Activated CD4-positive, alpha-beta memory T cell treated with anti-CD3 and anti-CD28 coated beads for 36 hours (primary cell): ENCODE measurements at regions of chr14 and their contacts with region 1.

Region 1: GRCh38 chr14:89509891-89510290 is 92.9 kb upstream of the FOXN3 start:
- DNase-seq: no peak
- H3K4me3 Mint-ChIP-seq: peak overlapping the region; percentile 77
- H3K27ac Mint-ChIP-seq: peak overlapping the region; percentile 93
- H3K4me1 Mint-ChIP-seq: peaks cover 72% of the 10 kb centered on the region
- H3K27me3 Mint-ChIP-seq: no peaks in the 10 kb centered on the region

Region 2: GRCh38 chr14:89276424-89276975 is 233.4 kb before region 1 on chr14:
- CTCF ChIA-PET with region 1: no interaction called
- POLR2A ChIA-PET with region 1: no interaction called
- intact Hi-C with region 1: loop called (anchors 10 kb)
- DNase-seq: peak; percentile 92
- H3K4me3 Mint-ChIP-seq: peak overlapping the region; percentile 60
- H3K27ac Mint-ChIP-seq: peak overlapping the region; percentile 94
- H3K4me1 Mint-ChIP-seq: peaks cover 77% of the 10 kb centered on the region
- H3K27me3 Mint-ChIP-seq: no peaks in the 10 kb centered on the region

Region 3: DNA sequence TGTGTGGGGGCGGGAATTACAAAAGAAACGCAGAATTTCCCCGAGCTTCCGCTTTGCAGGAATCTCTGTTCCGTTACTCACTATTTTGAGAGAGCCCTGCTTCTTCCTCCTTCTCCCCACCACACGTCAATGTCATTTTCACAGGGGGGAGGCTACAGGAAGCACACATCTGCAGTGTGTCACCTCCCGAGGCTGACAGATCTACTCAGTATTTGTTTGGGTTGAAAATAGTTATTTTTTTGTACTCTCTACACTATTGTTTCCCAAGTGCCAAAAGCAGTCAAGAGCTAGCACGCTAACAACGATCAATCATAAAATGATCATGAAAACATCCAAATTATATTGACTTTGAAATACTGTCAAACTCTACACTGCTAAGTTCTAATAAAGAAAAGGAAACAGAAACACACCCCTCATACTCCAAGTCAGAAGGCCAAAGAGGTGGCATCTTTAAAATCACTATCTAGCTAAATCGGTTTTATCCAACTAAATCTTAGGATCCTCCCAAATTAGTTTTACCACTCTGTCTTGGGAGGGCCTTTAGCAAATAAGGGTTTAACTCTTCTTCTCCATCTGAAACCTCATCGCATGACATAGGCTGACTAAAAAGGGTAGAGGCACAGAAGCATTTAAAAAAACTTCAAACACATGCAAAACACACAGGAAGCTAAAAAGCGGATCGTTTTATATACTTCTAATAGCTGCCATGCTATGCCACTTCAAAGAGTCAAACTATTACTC is 144.7 kb before region 1 on chr14:
- CTCF ChIA-PET with region 1: no interaction called
- POLR2A ChIA-PET with region 1: no interaction called
- intact Hi-C with region 1: loop called (anchors 1 kb)
- DNase-seq: peak; percentile 73
- H3K4me3 Mint-ChIP-seq: peak overlapping the region; percentile 73
- H3K27ac Mint-ChIP-seq: peak overlapping the region; percentile 93
- H3K4me1 Mint-ChIP-seq: peaks cover 53% of the 10 kb centered on the region
- H3K27me3 Mint-ChIP-seq: no peaks in the 10 kb centered on the region

Region 4: GRCh38 chr14:89430391-89431236 is 79.3 kb before region 1 on chr14:
- CTCF ChIA-PET with region 1: interaction called, 8 read pairs
- POLR2A ChIA-PET with region 1: interaction called, 9 read pairs
- intact Hi-C with region 1: loop called (anchors 1 kb)
- DNase-seq: peak; percentile 75
- H3K4me3 Mint-ChIP-seq: peak overlapping the region; percentile 67
- H3K27ac Mint-ChIP-seq: peak overlapping the region; percentile 88
- H3K4me1 Mint-ChIP-seq: peaks cover 69% of the 10 kb centered on the region
- H3K27me3 Mint-ChIP-seq: no peaks in the 10 kb centered on the region

Region 5: GRCh38 chr14:89613260-89614008 is 103.5 kb after region 1 on chr14:
- CTCF ChIA-PET with region 1: interaction called, 4 read pairs
- POLR2A ChIA-PET with region 1: no interaction called
- intact Hi-C with region 1: loop called (anchors 2 kb)
- DNase-seq: peak; percentile 69
- H3K4me3 Mint-ChIP-seq: peak overlapping the region; percentile 56
- H3K27ac Mint-ChIP-seq: peak overlapping the region; percentile 86
- H3K4me1 Mint-ChIP-seq: peaks cover 75% of the 10 kb centered on the region
- H3K27me3 Mint-ChIP-seq: no peaks in the 10 kb centered on the region

Region 6: GRCh38 chr14:89767861-89768268 is 258.0 kb after region 1 on chr14:
- CTCF ChIA-PET with region 1: no interaction called
- POLR2A ChIA-PET with region 1: no interaction called
- intact Hi-C with region 1: loop called (anchors 5 kb)
- DNase-seq: peak; percentile 75
- H3K4me3 Mint-ChIP-seq: no peak overlapping the region
- H3K27ac Mint-ChIP-seq: peak overlapping the region; percentile 39
- H3K4me1 Mint-ChIP-seq: peaks cover 18% of the 10 kb centered on the region
- H3K27me3 Mint-ChIP-seq: peaks cover 2% of the 10 kb centered on the region